ENCODE measurements at regions of chr3 and their contacts with region 1.

Region 1: GRCh38 chr3:45986303-45986982 is 9.2 kb downstream of the FYCO1 start:
- DNase-seq: peak; percentile 85
- H3K4me3 ChIP-seq: no peak overlapping the region
- H3K27ac ChIP-seq: peak overlapping the region; percentile 84 to 98 (median 95)
- H3K4me1 ChIP-seq: peaks cover 0 to 88% (median 82%) of the 10 kb centered on the region in 4 donors
- H3K27me3 ChIP-seq: no peaks in the 10 kb centered on the region
- CTCF ChIP-seq: no peak
- EP300 ChIP-seq: peak in 1 of 4 donors; percentile 66
- POLR2A ChIP-seq: no peak

Region 2: GRCh38 chr3:45972534-45973402 is 13.7 kb before region 1 on chr3:
- intact Hi-C with region 1: loop called (anchors 2 kb)
- DNase-seq: peak; percentile 84
- H3K4me3 ChIP-seq: no peak overlapping the region
- H3K27ac ChIP-seq: peak overlapping the region; percentile 66 to 87 (median 78)
- H3K4me1 ChIP-seq: peaks cover 0 to 60% (median 30%) of the 10 kb centered on the region in 4 donors
- H3K27me3 ChIP-seq: no peaks in the 10 kb centered on the region
- CTCF ChIP-seq: no peak
- EP300 ChIP-seq: peak in 3 of 4 donors; percentile 21 to 62 (median 27)
- POLR2A ChIP-seq: no peak

Measured in sigmoid colon (tissue), 7 donors.